ENCODE measurements at regions of chr18 and their contacts with region 1.

Region 1: GRCh38 chr18:44758861-44759631 is 78.4 kb downstream of the SETBP1 start:
- DNase-seq: peak; percentile 41
- ATAC-seq: peak; percentile 87
- H3K4me3 Mint-ChIP-seq: peak overlapping the region; percentile 76
- H3K27ac Mint-ChIP-seq: peak overlapping the region; percentile 94
- H3K4me1 Mint-ChIP-seq: peaks cover 93% of the 10 kb centered on the region
- H3K27me3 Mint-ChIP-seq: no peaks in the 10 kb centered on the region
- CTCF ChIP-seq: no peak

Region 2: GRCh38 chr18:43978174-43978573 is 780.9 kb before region 1 on chr18:
- CTCF ChIA-PET with region 1: no interaction called
- POLR2A ChIA-PET with region 1: no interaction called
- intact Hi-C with region 1: no loop called
- DNase-seq: no peak
- ATAC-seq: no peak
- H3K4me3 Mint-ChIP-seq: no peak overlapping the region
- H3K27ac Mint-ChIP-seq: no peak overlapping the region
- H3K4me1 Mint-ChIP-seq: no peaks in the 10 kb centered on the region
- H3K27me3 Mint-ChIP-seq: peaks cover 8% of the 10 kb centered on the region
- CTCF ChIP-seq: no peak

Region 3: GRCh38 chr18:44725300-44726096 is 33.5 kb before region 1 on chr18:
- CTCF ChIA-PET with region 1: interaction called, 21 read pairs
- POLR2A ChIA-PET with region 1: interaction called, 91 read pairs
- intact Hi-C with region 1: loop called (anchors 1 kb)
- DNase-seq: peak; percentile 41
- ATAC-seq: peak; percentile 59
- H3K4me3 Mint-ChIP-seq: peak overlapping the region; percentile 70
- H3K27ac Mint-ChIP-seq: peak overlapping the region; percentile 88
- H3K4me1 Mint-ChIP-seq: peaks cover 99% of the 10 kb centered on the region
- H3K27me3 Mint-ChIP-seq: no peaks in the 10 kb centered on the region
- CTCF ChIP-seq: no peak

Region 4: DNA sequence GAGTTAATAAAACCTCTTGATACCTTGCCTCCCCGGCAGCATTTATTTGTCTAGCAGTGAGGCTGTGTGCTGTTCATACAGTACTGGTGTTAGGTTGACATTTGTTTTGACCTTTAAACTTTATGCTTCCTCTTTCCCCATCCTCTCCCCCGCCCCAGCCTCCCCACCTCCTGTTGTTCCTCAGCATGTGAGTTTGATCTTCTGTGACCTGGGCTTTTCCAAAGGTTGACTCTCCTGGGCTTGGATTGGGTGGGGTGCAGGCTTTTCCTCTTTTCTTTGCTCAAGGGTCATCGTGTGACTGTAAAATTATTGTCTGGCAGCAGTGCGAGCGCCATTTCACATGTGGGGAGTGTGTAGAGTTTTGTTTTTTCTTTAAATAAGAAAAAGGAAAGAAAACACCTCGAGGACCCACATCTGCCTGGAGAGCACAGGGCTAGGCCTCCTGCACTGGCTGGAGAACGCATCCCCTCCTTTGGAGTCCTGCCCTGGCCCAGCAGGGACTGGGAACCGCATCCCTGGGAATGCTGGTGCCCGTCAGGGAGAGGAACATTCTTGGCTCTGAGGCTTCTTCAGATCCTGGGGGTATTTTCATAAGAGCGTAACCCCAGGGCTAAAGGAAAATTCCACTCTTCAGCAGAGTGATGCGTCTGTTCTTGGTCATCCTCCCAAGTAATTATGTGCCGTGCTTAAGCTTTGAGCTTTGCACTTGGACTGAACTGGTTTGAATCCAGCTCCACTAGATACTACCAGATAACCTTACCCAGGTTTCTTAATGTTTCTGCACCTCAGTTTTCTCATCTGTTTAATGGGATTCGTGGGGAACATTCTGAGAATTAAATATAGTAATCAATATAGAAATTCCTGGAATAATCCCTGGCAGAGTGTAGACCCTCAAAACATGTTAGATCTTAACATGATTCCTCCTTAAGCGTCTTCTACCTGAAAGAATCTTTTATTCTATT is 13.2 kb after region 1 on chr18:
- CTCF ChIA-PET with region 1: no interaction called
- POLR2A ChIA-PET with region 1: interaction called, 8 read pairs
- intact Hi-C with region 1: loop called (anchors 1 kb)
- DNase-seq: no peak
- ATAC-seq: peak; percentile 78
- H3K4me3 Mint-ChIP-seq: peak overlapping the region; percentile 33
- H3K27ac Mint-ChIP-seq: peak overlapping the region; percentile 73
- H3K4me1 Mint-ChIP-seq: peaks cover 86% of the 10 kb centered on the region
- H3K27me3 Mint-ChIP-seq: no peaks in the 10 kb centered on the region
- CTCF ChIP-seq: no peak

Region 5: GRCh38 chr18:44799907-44800421 is 40.9 kb after region 1 on chr18:
- CTCF ChIA-PET with region 1: no interaction called
- POLR2A ChIA-PET with region 1: interaction called, 35 read pairs
- intact Hi-C with region 1: loop called (anchors 1 kb)
- DNase-seq: no peak
- ATAC-seq: peak; percentile 43
- H3K4me3 Mint-ChIP-seq: peak overlapping the region; percentile 61
- H3K27ac Mint-ChIP-seq: peak overlapping the region; percentile 86
- H3K4me1 Mint-ChIP-seq: peaks cover 94% of the 10 kb centered on the region
- H3K27me3 Mint-ChIP-seq: no peaks in the 10 kb centered on the region
- CTCF ChIP-seq: no peak

Region 6: GRCh38 chr18:44838971-44839666 is 80.1 kb after region 1 on chr18:
- CTCF ChIA-PET with region 1: interaction called, 3 read pairs
- POLR2A ChIA-PET with region 1: interaction called, 8 read pairs
- intact Hi-C with region 1: loop called (anchors 1 kb)
- DNase-seq: peak; percentile 58
- ATAC-seq: peak; percentile 83
- H3K4me3 Mint-ChIP-seq: peak overlapping the region; percentile 61
- H3K27ac Mint-ChIP-seq: peak overlapping the region; percentile 81
- H3K4me1 Mint-ChIP-seq: peaks cover 81% of the 10 kb centered on the region
- H3K27me3 Mint-ChIP-seq: no peaks in the 10 kb centered on the region
- CTCF ChIP-seq: no peak

Region 7: GRCh38 chr18:45106331-45106774 is 347.3 kb after region 1 on chr18:
- CTCF ChIA-PET with region 1: no interaction called
- POLR2A ChIA-PET with region 1: interaction called, 9 read pairs
- intact Hi-C with region 1: loop called (anchors 1 kb)
- DNase-seq: peak; percentile 17
- ATAC-seq: peak; percentile 56
- H3K4me3 Mint-ChIP-seq: peak overlapping the region; percentile 21
- H3K27ac Mint-ChIP-seq: no peak overlapping the region
- H3K4me1 Mint-ChIP-seq: peaks cover 2% of the 10 kb centered on the region
- H3K27me3 Mint-ChIP-seq: no peaks in the 10 kb centered on the region
- CTCF ChIP-seq: no peak

Region 8: DNA sequence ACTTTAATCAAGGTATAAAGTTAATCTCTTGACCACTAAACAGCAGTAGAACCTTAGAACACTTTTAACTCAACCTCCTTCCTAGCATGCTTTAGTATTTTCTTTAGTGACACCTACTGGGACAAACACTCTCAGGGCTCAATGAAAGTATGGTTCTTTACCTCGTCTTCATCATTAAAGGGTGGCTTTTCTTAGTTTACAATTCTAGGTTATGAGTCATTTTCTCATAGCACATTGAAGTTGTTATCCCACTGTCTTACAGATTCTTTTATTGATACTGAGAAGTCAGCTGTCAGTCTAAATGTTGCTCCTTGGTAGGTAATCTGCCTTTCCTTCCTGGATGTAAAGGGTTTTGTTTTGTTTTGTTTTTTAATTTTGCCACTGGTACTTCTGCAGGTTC is 1104.4 kb after region 1 on chr18:
- CTCF ChIA-PET with region 1: no interaction called
- POLR2A ChIA-PET with region 1: no interaction called
- intact Hi-C with region 1: no loop called
- DNase-seq: no peak
- ATAC-seq: no peak
- H3K4me3 Mint-ChIP-seq: no peak overlapping the region
- H3K27ac Mint-ChIP-seq: no peak overlapping the region
- H3K4me1 Mint-ChIP-seq: no peaks in the 10 kb centered on the region
- H3K27me3 Mint-ChIP-seq: no peaks in the 10 kb centered on the region
- CTCF ChIP-seq: no peak

Measured in activated B cell treated with CpG ODN at 0.5 μM for 24 hours (primary cell).